ENCODE measurements at regions of chr1 and their contacts with region 1.

Region 1: GRCh38 chr1:226608699-226609505 is 60.3 kb downstream of the STUM start:
- DNase-seq: peak; percentile 70 to 88
- H3K4me3 ChIP-seq: no peak overlapping the region
- H3K27ac ChIP-seq: no peak overlapping the region
- H3K4me1 ChIP-seq: peaks cover 0 to 27% (median 16%) of the 10 kb centered on the region in 4 experiments; a peak in 6 of 7 replicates
- H3K27me3 ChIP-seq: no peaks in the 10 kb centered on the region
- CTCF ChIP-seq: peak; percentile 76 to 88 (median 84)
- EP300 ChIP-seq: no peak
- POLR2A ChIP-seq: no peak
- RAD21 ChIP-seq: peak; percentile 65 to 75

Region 2: DNA sequence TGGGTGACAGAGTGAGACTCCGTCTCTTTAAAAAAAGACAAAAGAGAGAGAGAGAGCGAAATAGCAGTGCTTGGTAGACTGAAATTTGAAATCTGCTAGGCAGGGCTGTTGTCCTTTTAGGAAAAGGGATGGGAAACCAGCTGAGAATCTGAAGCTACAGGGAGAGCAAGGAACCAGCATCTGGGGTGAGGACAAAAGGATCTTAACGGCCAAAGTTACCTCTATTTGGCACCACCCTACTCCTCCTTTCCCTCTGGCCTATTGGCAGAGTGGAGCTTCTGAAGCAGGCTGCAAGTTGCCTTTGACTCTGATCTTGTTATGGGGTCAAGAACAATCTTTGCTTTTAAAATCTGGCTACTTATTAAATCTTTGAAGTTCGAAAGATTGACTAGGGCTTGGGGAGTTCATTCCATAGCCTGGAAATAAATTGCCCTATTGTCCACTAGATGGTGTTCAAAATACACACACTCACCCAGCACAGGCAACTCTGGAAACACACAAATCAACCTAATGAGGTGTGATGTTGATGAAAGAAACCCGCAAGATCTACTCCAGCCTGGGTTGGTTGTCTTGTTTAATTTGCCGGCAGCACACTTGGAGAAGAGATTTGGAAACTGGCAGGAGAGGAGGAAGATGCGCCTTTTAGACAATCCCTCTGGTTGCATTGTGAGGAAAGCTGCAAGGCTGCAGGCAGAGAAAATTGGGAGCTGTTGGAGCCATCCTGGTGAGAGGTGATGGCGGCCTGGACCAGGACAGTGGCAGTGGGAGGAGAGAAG is 184.5 kb before region 1 on chr1:
- CTCF ChIA-PET with region 1: interaction called, 10 read pairs
- POLR2A ChIA-PET with region 1: no interaction called
- DNase-seq: no peak
- H3K4me3 ChIP-seq: no peak overlapping the region
- H3K27ac ChIP-seq: no peak overlapping the region
- H3K4me1 ChIP-seq: peaks cover 0 to 9% (median 4%) of the 10 kb centered on the region in 4 experiments; a peak in 4 of 7 replicates
- H3K27me3 ChIP-seq: peaks cover 0 to 2% (median 0%) of the 10 kb centered on the region in 4 experiments; a peak in 1 of 7 replicates
- CTCF ChIP-seq: peak in 2 of 3 experiments; percentile 50 to 57; a peak in 3 of 4 replicates
- EP300 ChIP-seq: no peak
- POLR2A ChIP-seq: no peak
- RAD21 ChIP-seq: peak; percentile 67 to 71

Region 3: GRCh38 chr1:226575739-226576378 is 33.0 kb before region 1 on chr1:
- CTCF ChIA-PET with region 1: interaction called, 35 read pairs
- POLR2A ChIA-PET with region 1: no interaction called
- DNase-seq: no peak
- H3K4me3 ChIP-seq: no peak overlapping the region
- H3K27ac ChIP-seq: no peak overlapping the region
- H3K4me1 ChIP-seq: peaks cover 0 to 4% (median 0%) of the 10 kb centered on the region in 4 experiments; a peak in 1 of 7 replicates
- H3K27me3 ChIP-seq: no peaks in the 10 kb centered on the region
- CTCF ChIP-seq: no peak
- EP300 ChIP-seq: no peak
- POLR2A ChIP-seq: no peak
- RAD21 ChIP-seq: no peak

Region 4: DNA sequence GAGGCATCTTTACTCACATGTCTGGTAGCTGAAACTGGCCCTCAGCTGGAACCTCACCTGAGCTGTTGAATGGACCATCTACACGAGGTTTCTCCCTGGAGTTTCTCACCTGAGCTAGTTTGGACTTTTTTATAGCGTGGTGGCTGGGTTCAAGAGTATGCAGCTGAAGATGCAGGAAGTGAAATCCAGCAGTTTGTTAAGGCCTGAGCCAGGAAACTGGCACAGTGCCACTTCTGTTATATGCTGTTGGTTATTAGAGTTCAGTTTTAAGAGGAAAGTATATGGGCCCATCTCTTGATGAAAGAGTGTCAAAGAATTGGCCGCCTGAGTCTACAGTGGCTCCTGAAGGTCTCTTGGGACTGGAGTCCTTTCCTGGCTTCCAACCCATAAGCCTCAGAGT is 24.7 kb before region 1 on chr1:
- CTCF ChIA-PET with region 1: interaction called, 27 read pairs
- POLR2A ChIA-PET with region 1: interaction called, 3 read pairs
- DNase-seq: no peak
- H3K4me3 ChIP-seq: no peak overlapping the region
- H3K27ac ChIP-seq: no peak overlapping the region
- H3K4me1 ChIP-seq: no peaks in the 10 kb centered on the region
- H3K27me3 ChIP-seq: no peaks in the 10 kb centered on the region
- CTCF ChIP-seq: no peak
- EP300 ChIP-seq: no peak
- POLR2A ChIP-seq: no peak
- RAD21 ChIP-seq: no peak

Region 5: DNA sequence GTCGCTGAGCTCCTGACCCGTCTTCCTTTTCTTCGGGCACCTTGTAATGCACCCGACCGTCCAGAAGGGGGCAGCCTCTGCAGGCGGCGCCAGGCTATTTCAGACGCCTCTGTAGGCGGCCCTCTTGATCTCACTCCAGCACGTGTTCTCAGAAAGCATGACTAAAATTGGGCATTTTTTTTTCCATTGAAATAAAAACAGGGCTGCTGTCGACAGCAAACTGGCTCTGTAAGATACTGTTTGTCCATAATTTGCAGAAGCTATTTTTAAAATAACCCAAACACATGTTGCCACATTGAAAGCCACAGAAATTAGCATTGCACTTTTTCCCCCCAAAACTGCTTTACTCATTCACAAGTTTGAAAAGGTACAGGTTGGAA is 17.7 kb after region 1 on chr1:
- CTCF ChIA-PET with region 1: interaction called, 16 read pairs
- POLR2A ChIA-PET with region 1: interaction called, 3 read pairs
- DNase-seq: peak; percentile 56 to 91
- H3K4me3 ChIP-seq: no peak overlapping the region
- H3K27ac ChIP-seq: no peak overlapping the region
- H3K4me1 ChIP-seq: no peaks in the 10 kb centered on the region
- H3K27me3 ChIP-seq: peaks cover 0 to 10% (median 10%) of the 10 kb centered on the region in 4 experiments; a peak in 6 of 7 replicates
- CTCF ChIP-seq: peak; percentile 86 to 94 (median 88)
- EP300 ChIP-seq: no peak
- POLR2A ChIP-seq: no peak
- RAD21 ChIP-seq: peak; percentile 81 to 85

Measured in H1 (cell line).